ENCODE measurements at regions of chr11 and their contacts with region 1.

Region 1: GRCh38 chr11:78312712-78313111 is 104.9 kb downstream of the GAB2 start:
- DNase-seq: no peak
- ATAC-seq: peak; percentile 28
- H3K4me3 ChIP-seq: no peak overlapping the region
- H3K4me3 Mint-ChIP-seq: peak overlapping the region; percentile 1
- H3K27ac ChIP-seq: no peak overlapping the region
- H3K27ac Mint-ChIP-seq: no peak overlapping the region
- H3K4me1 ChIP-seq: peaks cover 21 to 31% of the 10 kb centered on the region in 2 donors
- H3K4me1 Mint-ChIP-seq: peaks cover 55% of the 10 kb centered on the region
- H3K27me3 ChIP-seq: no peaks in the 10 kb centered on the region
- H3K27me3 Mint-ChIP-seq: no peaks in the 10 kb centered on the region
- CTCF ChIP-seq: no peak

Region 2: GRCh38 chr11:78432058-78432515 is 119.4 kb after region 1 on chr11:
- CTCF ChIA-PET with region 1: interaction called, 5 read pairs
- POLR2A ChIA-PET with region 1: interaction called, 11 read pairs
- intact Hi-C with region 1: no loop called
- DNase-seq: peak; percentile 44
- ATAC-seq: no peak
- H3K4me3 ChIP-seq: no peak overlapping the region
- H3K4me3 Mint-ChIP-seq: no peak overlapping the region
- H3K27ac ChIP-seq: no peak overlapping the region
- H3K27ac Mint-ChIP-seq: peak overlapping the region; percentile 20
- H3K4me1 ChIP-seq: peaks cover 34 to 38% of the 10 kb centered on the region in 2 donors
- H3K4me1 Mint-ChIP-seq: peaks cover 42% of the 10 kb centered on the region
- H3K27me3 ChIP-seq: no peaks in the 10 kb centered on the region
- H3K27me3 Mint-ChIP-seq: no peaks in the 10 kb centered on the region
- CTCF ChIP-seq: peak; percentile 72

Measured in B cell (primary cell).